ENCODE measurements at regions of chr12 and their contacts with region 1.

Region 1: DNA sequence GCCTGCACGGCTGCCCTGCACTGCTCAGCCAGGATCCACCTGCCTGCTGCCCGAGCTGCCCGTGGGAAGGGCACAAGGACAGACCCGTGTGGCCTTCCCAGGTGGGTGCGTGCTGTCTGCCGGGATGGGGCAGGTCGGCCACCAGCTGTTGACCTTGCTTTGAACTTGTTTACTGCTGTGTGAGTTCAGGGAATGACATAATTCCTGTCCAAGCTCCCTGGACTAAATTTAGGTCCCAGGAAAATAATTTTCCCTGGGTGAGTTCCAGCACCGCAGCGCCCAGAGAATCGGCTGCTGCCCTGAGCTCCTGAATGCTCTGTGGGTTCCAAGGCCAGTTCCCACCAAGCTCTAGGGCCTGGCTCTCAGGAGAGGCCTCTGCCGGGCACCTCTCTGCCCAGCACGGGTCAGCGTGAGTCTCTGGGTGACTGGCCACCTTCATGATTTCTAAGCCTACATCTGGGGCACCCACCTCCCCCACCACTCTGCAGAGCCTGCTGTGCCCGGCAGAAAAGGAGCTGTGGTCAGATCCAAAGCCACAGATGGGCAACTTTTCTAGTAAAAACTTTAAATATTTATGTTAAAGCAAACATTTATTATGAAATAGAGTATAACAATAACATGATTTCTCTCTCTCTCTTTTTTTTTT is 27.2 kb upstream of the MLXIP start:
- DNase-seq: no peak
- H3K4me3 ChIP-seq: no peak overlapping the region
- CTCF ChIP-seq: no peak

Region 2: GRCh38 chr12:121917979-121918678 is 133.2 kb before region 1 on chr12 and contains the start of gene CFAP251:
- CTCF ChIA-PET with region 1: interaction called, 11 read pairs
- POLR2A ChIA-PET with region 1: no interaction called
- DNase-seq: peak; percentile 21
- H3K4me3 ChIP-seq: peak within 1 kb of the TSS; percentile 48
- CTCF ChIP-seq: peak; percentile 86

Region 3: GRCh38 chr12:122064025-122064777 is 12.8 kb after region 1 on chr12:
- CTCF ChIA-PET with region 1: interaction called, 55 read pairs
- POLR2A ChIA-PET with region 1: no interaction called
- DNase-seq: peak; percentile 81
- H3K4me3 ChIP-seq: peak overlapping the region; percentile 37
- CTCF ChIP-seq: peak; percentile 52

Region 4: GRCh38 chr12:122107261-122107660 is 55.9 kb after region 1 on chr12:
- CTCF ChIA-PET with region 1: interaction called, 14 read pairs
- POLR2A ChIA-PET with region 1: no interaction called
- DNase-seq: no peak
- H3K4me3 ChIP-seq: no peak overlapping the region
- CTCF ChIP-seq: no peak

Region 5: DNA sequence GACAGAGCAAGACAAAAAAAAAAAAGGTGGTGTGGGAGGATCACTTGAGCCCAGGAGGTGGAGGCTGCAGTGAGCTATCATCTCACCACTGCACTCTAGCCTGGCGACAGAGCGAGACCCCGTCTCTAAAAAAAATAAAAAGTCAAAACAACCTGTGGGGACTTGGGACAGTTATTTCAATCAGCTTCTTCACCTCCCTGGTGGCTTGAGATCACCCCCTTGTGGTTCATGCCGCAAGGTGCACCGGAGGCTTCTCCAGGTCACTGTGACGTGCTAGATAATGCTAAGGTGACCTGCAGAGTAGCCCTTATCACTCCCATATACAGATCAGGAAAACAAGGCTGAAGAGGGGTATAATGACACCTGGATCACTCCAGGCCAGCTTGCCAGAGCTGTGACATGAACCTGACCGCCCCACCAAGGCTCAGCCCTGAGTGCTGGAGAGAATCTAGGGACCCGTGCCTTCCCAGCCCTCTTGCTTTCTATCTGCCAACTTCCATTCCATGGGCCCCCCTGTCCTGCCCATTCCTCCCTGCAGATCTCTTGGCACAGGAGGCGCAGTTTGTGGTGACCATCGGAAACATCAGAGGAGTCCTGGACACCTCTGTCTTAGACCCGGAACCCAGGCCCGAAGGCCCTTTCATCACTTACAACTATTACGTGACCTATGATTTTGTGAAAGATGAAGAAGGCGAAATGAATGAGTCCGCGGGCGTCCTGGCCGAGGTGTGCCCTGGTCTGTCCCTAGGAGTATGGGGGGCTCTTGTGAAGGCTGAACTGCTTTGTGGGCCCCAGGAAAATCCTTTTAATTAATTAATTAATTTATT is 139.7 kb after region 1 on chr12:
- CTCF ChIA-PET with region 1: interaction called, 43 read pairs
- POLR2A ChIA-PET with region 1: no interaction called
- DNase-seq: no peak
- H3K4me3 ChIP-seq: no peak overlapping the region
- CTCF ChIP-seq: peak; percentile 80

Measured in AG04449 (cell line).